Lower leg skin (tissue), 4 donors: ENCODE measurements at regions of chr11 and their contacts with region 1.

Region 1: GRCh38 chr11:112889446-112889845 is 71.8 kb upstream of the NCAM1 start:
- DNase-seq: no peak
- H3K4me3 ChIP-seq: no peak overlapping the region
- CTCF ChIP-seq: no peak
- POLR2A ChIP-seq: no peak

Region 2: GRCh38 chr11:112942966-112943643 is 53.7 kb after region 1 on chr11:
- intact Hi-C with region 1: loop called (anchors 2 kb)
- DNase-seq: no peak
- H3K4me3 ChIP-seq: no peak overlapping the region
- CTCF ChIP-seq: no peak
- POLR2A ChIP-seq: no peak

Region 3: DNA sequence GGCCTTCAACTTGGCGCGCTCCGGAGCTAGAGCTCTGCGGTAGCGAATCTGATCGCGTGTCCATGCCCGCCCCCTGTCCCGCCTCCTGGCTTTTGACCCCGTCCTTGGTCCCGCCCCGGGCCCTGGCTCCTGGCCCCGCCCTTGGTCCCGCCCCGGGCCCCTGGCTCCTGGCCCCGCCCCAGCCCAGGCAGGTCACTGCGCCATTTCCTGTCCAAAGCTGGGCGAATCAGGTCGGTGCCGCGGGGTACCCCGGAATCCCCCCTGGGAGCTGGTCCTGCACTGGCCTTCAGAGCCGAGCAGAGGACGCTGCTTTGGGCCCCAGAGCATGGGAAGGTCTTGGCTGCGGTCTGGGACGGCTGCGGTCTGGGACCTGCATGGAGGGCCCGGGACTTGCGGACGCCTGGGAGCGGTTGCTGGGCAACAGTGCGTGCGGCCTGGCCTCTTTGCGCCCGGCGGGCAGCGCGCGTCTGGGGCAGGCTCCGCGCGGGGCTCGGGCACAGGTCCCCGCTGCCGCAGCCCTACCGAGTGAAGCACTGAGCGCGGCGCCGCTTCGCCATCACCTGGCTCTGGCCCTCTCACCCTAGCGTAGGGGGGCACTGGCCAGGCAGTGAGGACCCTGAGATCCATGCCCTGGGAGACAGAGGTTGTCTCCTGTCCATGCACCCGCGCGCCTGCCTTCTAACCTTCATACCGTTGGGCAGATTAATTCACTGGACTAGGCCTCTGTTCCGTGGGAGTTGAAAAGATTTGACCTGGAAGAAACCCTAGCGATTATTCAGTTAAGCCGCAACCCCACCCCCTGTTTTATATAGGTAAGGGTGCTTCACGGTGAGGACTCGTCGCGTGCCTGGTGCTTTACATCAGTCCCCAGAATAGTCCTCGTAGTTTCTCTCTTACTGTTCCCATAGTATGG is 425.2 kb after region 1 on chr11 and contains the start of gene TTC12:
- intact Hi-C with region 1: no loop called
- DNase-seq: peak; percentile 90 to 98
- H3K4me3 ChIP-seq: peak within 1 kb of the TSS; percentile 57
- CTCF ChIP-seq: no peak
- POLR2A ChIP-seq: no peak
- total RNA-seq, gene TTC12: 14.5 to 48.2 (median 21.9) TPM